Activated CD4-positive, alpha-beta memory T cell treated with anti-CD3 and anti-CD28 coated beads for 36 hours (primary cell): ENCODE measurements at regions of chr17 and their contacts with region 1.

Region 1: GRCh38 chr17:63611354-63611753 is 10.7 kb downstream of the TACO1 start:
- DNase-seq: peak; percentile 75
- H3K4me3 Mint-ChIP-seq: peak overlapping the region; percentile 64
- H3K27ac Mint-ChIP-seq: peak overlapping the region; percentile 97
- H3K4me1 Mint-ChIP-seq: peaks cover 29% of the 10 kb centered on the region
- H3K27me3 Mint-ChIP-seq: no peaks in the 10 kb centered on the region

Region 2: DNA sequence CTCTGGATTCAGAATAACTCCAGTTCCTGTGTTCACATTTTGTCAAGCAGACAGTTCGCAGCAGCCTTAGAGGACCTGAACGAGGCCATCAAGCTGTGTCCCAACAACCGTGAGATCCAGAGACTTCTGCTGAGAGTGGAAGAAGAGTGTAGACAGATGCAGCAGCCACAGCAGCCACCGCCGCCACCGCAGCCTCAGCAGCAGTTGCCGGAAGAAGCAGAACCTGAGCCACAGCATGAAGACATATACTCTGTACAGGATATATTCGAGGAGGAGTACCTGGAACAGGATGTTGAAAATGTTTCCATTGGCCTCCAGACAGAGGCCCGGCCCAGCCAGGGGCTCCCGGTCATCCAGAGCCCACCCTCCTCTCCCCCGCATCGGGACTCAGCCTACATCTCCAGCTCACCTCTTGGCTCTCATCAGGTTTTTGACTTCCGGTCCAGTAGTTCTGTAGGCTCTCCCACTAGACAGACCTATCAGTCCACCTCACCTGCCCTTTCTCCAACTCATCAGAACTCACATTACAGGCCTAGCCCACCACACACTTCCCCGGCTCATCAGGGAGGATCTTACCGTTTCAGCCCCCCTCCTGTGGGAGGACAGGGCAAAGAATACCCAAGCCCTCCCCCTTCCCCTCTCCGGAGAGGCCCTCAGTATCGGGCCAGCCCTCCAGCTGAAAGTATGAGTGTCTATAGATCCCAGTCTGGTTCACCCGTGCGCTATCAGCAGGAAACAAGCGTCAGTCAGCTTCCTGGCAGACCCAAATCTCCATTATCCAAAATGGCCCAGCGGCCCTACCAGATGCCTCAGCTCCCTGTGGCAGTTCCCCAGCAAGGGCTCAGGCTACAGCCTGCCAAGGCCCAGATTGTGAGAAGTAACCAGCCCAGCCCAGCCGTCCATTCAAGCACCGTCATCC is 191.1 kb before region 1 on chr17:
- CTCF ChIA-PET with region 1: interaction called, 243 read pairs
- POLR2A ChIA-PET with region 1: no interaction called
- intact Hi-C with region 1: loop called (anchors 1 kb)
- DNase-seq: peak; percentile 62
- H3K4me3 Mint-ChIP-seq: no peak overlapping the region
- H3K27ac Mint-ChIP-seq: peak overlapping the region; percentile 50
- H3K4me1 Mint-ChIP-seq: peaks cover 13% of the 10 kb centered on the region
- H3K27me3 Mint-ChIP-seq: no peaks in the 10 kb centered on the region

Region 3: DNA sequence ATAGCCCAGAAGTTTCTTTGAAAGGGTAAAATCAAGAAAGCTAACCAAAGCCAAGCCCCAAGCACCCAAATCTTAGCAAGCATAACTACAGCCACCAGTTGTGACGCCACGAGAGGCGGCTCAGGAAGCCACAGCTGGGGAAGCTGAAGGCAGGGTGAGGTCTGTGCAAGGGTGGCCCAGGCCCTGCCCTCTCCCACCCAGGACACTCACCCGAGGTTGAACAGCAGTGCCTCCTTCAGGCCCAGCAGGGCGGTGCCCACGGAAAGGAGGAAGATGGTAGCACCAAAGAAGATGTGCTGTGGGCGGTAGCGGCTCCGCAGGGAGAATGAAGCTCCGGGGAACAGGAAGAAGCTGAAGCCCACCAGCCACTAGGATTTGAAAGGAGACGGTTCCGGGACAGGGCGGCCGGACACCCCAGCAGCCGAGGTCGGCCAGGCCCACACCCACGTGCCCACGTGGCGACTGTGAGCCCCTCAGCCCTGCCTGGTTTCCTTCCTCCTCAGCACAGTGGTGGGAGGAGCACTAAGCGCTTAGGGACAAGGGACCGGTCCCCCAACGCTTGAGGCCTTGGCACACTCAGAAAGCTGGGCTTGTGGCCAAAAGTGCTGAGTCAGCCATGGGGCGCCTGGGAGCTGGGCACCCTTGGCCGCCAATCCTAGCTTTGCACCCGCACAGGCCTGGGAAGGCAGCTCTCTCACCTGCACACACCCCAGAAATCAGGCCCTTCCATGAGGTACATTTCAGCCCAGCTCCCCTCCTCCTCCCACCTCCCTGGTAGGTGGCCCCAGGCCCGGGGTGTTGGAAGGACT is 176.3 kb before region 1 on chr17:
- CTCF ChIA-PET with region 1: interaction called, 243 read pairs
- POLR2A ChIA-PET with region 1: no interaction called
- intact Hi-C with region 1: no loop called
- DNase-seq: peak; percentile 56
- H3K4me3 Mint-ChIP-seq: no peak overlapping the region
- H3K27ac Mint-ChIP-seq: peak overlapping the region; percentile 46
- H3K4me1 Mint-ChIP-seq: peaks cover 40% of the 10 kb centered on the region
- H3K27me3 Mint-ChIP-seq: no peaks in the 10 kb centered on the region

Region 4: DNA sequence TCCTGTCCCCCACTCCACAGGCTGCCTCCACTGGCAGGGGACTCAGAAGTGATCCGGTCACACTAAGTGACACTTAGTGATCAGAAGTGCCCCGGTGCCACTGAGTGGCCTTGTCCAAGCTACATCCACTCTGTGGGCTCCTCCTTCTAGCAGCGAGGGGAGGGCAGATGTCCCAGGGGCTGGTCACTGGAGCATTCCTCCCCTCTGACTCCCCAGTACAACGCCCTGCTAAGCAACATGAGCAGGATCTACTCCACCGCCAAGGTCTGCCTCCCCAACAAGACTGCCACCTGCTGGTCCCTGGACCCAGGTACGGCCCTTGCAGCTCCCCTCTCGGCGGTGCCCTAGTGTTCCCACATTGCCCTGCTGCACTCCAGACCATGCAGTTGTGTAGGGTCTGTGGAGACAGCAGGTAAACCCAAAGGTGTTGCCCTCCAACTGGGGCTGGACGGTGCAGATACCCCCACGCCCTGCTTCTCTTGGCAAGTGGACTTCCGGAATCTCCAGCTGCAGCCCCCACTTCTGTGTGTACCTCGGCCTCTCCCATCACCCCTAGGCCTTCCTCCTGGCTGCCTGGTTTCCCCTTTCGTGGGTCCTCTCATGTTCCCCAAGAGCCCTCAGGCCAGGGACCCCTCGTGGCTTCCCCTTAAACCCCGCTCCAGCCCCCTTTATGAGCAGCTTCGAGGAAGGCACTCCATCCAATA is 132.4 kb before region 1 on chr17:
- CTCF ChIA-PET with region 1: interaction called, 43 read pairs
- POLR2A ChIA-PET with region 1: no interaction called
- intact Hi-C with region 1: loop called (anchors 1 kb)
- DNase-seq: peak; percentile 88
- H3K4me3 Mint-ChIP-seq: peak overlapping the region; percentile 16
- H3K27ac Mint-ChIP-seq: no peak overlapping the region
- H3K4me1 Mint-ChIP-seq: peaks cover 15% of the 10 kb centered on the region
- H3K27me3 Mint-ChIP-seq: peaks cover 5% of the 10 kb centered on the region

Region 5: GRCh38 chr17:63549946-63550807 is 61.2 kb before region 1 on chr17 and contains the start of gene DCAF7:
- CTCF ChIA-PET with region 1: interaction called, 33 read pairs
- POLR2A ChIA-PET with region 1: interaction called, 14 read pairs
- intact Hi-C with region 1: loop called (anchors 1 kb)
- DNase-seq: peak; percentile 100
- H3K4me3 Mint-ChIP-seq: peak within 1 kb of the TSS; percentile 85
- H3K27ac Mint-ChIP-seq: peak within 1 kb of the TSS; percentile 96
- H3K4me1 Mint-ChIP-seq: peaks cover 32% of the 10 kb centered on the region
- H3K27me3 Mint-ChIP-seq: no peaks in the 10 kb centered on the region
- total RNA-seq, gene DCAF7: 118 to 119 TPM

Region 6: GRCh38 chr17:63621766-63622519 is 10.6 kb after region 1 on chr17 and contains the start of gene MAP3K3:
- CTCF ChIA-PET with region 1: interaction called, 52 read pairs
- POLR2A ChIA-PET with region 1: interaction called, 16 read pairs
- intact Hi-C with region 1: loop called (anchors 1 kb)
- DNase-seq: peak; percentile 99
- H3K4me3 Mint-ChIP-seq: peak within 1 kb of the TSS; percentile 99
- H3K27ac Mint-ChIP-seq: peak within 1 kb of the TSS; percentile 87
- H3K4me1 Mint-ChIP-seq: peaks cover 38% of the 10 kb centered on the region
- H3K27me3 Mint-ChIP-seq: no peaks in the 10 kb centered on the region
- total RNA-seq, gene MAP3K3: 32.8 to 34.0 TPM